Gastrocnemius medialis (tissue), 4 donors: ENCODE measurements at regions of chr20 and their contacts with region 1.

Region 1: DNA sequence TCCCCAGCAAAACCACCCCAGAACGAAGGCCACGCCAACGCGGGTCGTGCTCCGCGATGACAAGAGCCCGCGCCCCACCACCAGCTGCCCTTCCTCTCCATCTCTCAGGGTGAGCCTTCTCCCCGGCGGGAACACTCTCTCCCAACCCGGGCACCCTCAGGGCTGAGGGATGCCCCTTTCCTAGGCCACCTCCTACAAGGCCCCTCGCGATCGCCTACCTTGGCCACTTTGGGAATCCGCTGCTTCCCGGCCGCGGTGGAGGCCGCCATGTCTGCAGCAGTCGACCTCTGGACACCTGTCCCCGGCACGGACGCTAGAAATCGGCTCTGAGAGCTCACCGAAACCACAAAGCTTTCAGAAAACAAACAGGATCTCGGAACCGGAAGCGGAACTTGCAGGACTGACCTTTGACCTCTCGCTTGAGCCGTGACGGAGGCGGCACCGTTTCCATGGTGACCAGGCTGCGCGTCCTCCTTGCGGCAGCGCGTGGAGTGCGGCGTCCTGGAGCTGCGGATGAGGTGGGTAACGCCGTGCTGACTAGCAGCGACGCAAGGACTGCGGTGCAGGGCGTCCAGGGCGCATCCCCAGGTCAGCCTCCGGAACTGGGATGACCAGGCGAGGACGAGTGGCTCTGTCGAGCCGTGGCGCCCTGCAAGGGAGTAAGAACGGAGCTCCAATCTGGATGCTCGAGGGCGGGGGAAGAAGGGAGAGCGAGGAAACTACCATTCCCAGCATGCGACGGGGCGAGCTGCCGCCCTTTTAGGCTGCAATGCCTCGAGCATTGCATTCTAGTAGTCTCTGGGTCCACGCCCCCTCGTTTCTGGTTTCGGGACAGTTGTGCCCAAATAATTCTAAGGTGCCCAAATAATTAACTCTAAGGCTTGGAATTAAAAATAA is at the starts of genes CFAP61 and CRNKL1:
- DNase-seq: peak; percentile 94 to 95
- ATAC-seq: peak; percentile 97
- H3K4me3 ChIP-seq: peak within 1 kb of the TSS; percentile 79 to 97 (median 95)
- H3K27ac ChIP-seq: peak within 1 kb of the TSS; percentile 84 to 95 (median 86)
- H3K4me1 ChIP-seq: peaks cover 15 to 18% of the 10 kb centered on the region in 2 donors
- H3K27me3 ChIP-seq: no peaks in the 10 kb centered on the region
- CTCF ChIP-seq: peak in 2 of 5 experiments; percentile 3 to 29
- POLR2A ChIP-seq: peak; percentile 36
- total RNA-seq, gene CFAP61: 17.1 to 94.8 (median 41.4) TPM
- total RNA-seq, gene CRNKL1: 32.2 to 45.3 (median 39.2) TPM

Region 2: GRCh38 chr20:18904624-18905023 is 1147.7 kb before region 1 on chr20:
- in situ Hi-C with region 1: no loop called
- intact Hi-C with region 1: no loop called
- DNase-seq: no peak
- ATAC-seq: no peak
- H3K4me3 ChIP-seq: no peak overlapping the region
- H3K27ac ChIP-seq: no peak overlapping the region
- H3K4me1 ChIP-seq: no peaks in the 10 kb centered on the region
- H3K27me3 ChIP-seq: no peaks in the 10 kb centered on the region
- CTCF ChIP-seq: peak in 1 of 5 experiments; percentile 11
- POLR2A ChIP-seq: no peak

Region 3: GRCh38 chr20:20017001-20017843 is 35.1 kb before region 1 on chr20 and contains the start of gene NAA20:
- in situ Hi-C with region 1: no loop called
- intact Hi-C with region 1: loop called (anchors 1 kb)
- DNase-seq: peak; percentile 92
- ATAC-seq: peak; percentile 97 to 98
- H3K4me3 ChIP-seq: peak within 1 kb of the TSS; percentile 81 to 98 (median 88)
- H3K27ac ChIP-seq: peak within 1 kb of the TSS; percentile 73 to 93 (median 82)
- H3K4me1 ChIP-seq: peaks cover 23 to 24% of the 10 kb centered on the region in 2 donors
- H3K27me3 ChIP-seq: no peaks in the 10 kb centered on the region
- CTCF ChIP-seq: peak; percentile 82 to 92 (median 84)
- POLR2A ChIP-seq: peak; percentile 59 to 66
- total RNA-seq, gene NAA20: 45.5 to 73.2 (median 61.5) TPM

Region 4: DNA sequence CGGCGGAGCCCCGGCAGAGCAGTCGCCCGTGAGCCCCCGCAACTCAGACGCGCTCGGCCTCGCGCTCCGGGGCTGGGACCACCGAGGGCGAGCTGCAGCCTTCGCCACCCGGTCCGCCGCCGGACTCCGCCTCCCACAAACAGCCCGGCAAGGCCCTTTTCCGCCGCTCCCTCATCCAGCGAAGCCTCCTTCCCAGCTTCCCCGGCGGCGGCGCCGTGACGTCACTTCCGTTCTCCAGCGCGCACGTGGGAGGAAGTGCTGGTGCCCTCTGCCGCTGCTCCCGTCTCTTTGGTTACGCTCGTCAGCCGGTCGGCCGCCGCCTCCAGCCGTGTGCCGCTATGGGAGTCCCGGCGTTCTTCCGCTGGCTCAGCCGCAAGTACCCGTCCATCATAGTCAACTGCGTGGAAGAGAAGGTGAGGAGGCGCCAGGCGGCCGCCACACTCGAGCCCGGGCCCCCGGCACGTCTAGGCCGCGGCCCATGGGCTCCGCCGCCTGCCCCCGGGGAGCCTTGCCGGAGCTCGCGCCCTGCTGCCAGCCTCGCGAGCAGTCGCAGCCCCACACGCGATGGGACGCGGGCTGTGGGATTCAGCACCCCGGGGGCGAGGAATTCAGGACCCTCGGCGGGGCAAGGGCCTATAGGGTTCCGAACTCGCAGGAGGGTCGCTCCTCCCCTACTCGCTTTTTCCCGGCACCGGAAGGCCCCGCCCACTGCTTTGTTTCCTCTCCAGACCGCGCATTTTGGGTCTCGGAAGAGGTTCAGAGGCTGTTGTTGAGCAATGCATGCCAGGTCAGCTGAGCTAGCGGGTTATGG is 1250.9 kb after region 1 on chr20 and contains the start of gene XRN2:
- in situ Hi-C with region 1: no loop called
- intact Hi-C with region 1: loop called (anchors 5 kb)
- DNase-seq: peak; percentile 91
- ATAC-seq: peak; percentile 97 to 98
- H3K4me3 ChIP-seq: peak within 1 kb of the TSS; percentile 70 to 90 (median 80)
- H3K27ac ChIP-seq: peak within 1 kb of the TSS; percentile 88 to 97 (median 96)
- H3K4me1 ChIP-seq: peaks cover 14 to 16% of the 10 kb centered on the region in 2 donors
- H3K27me3 ChIP-seq: no peaks in the 10 kb centered on the region
- CTCF ChIP-seq: peak in 1 of 5 experiments; percentile 14
- POLR2A ChIP-seq: peak; percentile 71 to 84
- total RNA-seq, gene XRN2: 42.0 to 68.4 (median 52.3) TPM